PC-9 (cell line): ENCODE measurements at regions of chr5 and their contacts with region 1.

Region 1: GRCh38 chr5:136819526-136820307 is 454.4 kb upstream of the TRPC7 start:
- DNase-seq: no peak
- H3K4me3 ChIP-seq: no peak overlapping the region
- H3K27ac ChIP-seq: no peak overlapping the region
- H3K4me1 ChIP-seq: no peaks in the 10 kb centered on the region
- H3K27me3 ChIP-seq: no peaks in the 10 kb centered on the region
- CTCF ChIP-seq: no peak

Region 2: DNA sequence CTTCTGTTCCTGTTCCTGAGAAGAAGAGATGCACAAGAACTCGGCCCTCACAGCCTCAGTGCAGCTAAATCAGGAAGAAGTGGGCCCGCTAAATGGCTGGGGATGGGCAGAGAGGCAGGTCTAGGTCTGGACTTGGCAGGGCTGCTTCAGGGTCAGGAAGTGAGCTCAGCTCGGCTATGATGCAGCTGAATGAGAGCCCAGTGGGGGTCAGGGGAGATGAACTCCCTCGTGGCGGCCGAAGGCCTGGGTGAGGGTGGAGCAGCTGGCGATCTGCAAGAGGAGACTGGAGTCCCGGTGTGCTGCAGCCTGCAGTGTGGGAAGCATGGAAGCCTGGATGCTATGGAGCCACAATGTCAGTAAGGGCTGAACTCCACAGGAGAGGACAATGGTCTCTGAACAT is 213.2 kb after region 1 on chr5:
- CTCF ChIA-PET with region 1: interaction called, 11 read pairs
- POLR2A ChIA-PET with region 1: no interaction called
- intact Hi-C with region 1: no loop called
- DNase-seq: no peak
- H3K4me3 ChIP-seq: no peak overlapping the region
- H3K27ac ChIP-seq: no peak overlapping the region
- H3K4me1 ChIP-seq: no peaks in the 10 kb centered on the region; the same call in 1 of the 2 replicates
- H3K27me3 ChIP-seq: no peaks in the 10 kb centered on the region
- CTCF ChIP-seq: no peak